ENCODE measurements at regions of chr17 and their contacts with region 1.

Region 1: DNA sequence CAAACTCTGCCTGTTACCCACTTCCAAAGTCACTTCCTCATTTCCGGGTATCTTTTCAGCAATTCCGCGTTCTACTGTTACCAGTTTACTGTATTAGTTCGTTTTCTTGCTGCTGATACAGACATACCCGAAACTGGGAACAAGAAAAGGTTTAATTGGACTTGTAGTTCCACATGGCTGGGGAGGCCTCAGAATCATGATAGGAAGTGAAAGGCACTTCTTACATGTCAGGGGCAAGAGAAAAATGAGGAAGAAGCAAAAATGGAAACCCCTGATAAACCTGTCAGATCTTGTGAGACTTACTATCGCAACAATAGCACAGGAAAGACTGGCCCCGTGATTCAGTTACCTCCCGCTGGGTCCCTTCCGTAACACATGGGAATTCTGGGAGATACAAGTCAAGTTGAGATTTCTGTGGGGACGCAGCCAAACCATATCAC is 30.9 kb downstream of the PAFAH1B1 start:
- DNase-seq: no peak
- ATAC-seq: no peak
- H3K4me3 Mint-ChIP-seq: no peak overlapping the region
- H3K27ac Mint-ChIP-seq: peak overlapping the region; percentile 11
- H3K4me1 Mint-ChIP-seq: peaks cover 57% of the 10 kb centered on the region
- H3K27me3 Mint-ChIP-seq: no peaks in the 10 kb centered on the region

Region 2: DNA sequence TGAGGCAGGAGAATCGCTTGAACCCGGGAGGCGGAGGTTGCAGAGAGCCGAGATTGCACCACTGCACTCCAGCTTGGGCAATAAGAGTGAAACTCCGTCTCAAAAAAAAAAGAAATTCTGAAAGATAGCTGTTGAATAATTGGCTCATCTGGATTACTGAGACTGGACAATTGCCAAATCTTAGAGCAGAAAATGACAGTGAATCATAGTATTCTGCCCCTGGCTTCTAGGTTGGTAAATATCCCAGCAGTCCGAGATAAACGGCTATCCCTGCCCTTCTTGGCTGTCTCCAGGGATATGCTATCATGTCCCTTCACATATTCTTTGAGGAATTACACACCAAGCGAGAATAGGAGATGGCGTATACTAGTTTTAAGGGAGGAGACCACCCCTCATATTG is 77.1 kb before region 1 on chr17:
- CTCF ChIA-PET with region 1: no interaction called
- POLR2A ChIA-PET with region 1: interaction called, 10 read pairs
- intact Hi-C with region 1: no loop called
- DNase-seq: no peak
- ATAC-seq: no peak
- H3K4me3 Mint-ChIP-seq: no peak overlapping the region
- H3K27ac Mint-ChIP-seq: no peak overlapping the region
- H3K4me1 Mint-ChIP-seq: no peaks in the 10 kb centered on the region
- H3K27me3 Mint-ChIP-seq: peaks cover 2% of the 10 kb centered on the region